Activated CD4-positive, alpha-beta T cell treated with anti-CD3 and anti-CD28 coated beads for 36 hours (primary cell): ENCODE measurements at regions of chr21 and their contacts with region 1.

Region 1: GRCh38 chr21:33299181-33299752 is 25.5 kb upstream of the IFNAR1 start:
- DNase-seq: peak; percentile 69
- ATAC-seq: peak; percentile 90
- H3K4me3 Mint-ChIP-seq: peak overlapping the region; percentile 19
- H3K27ac Mint-ChIP-seq: peak overlapping the region; percentile 85
- H3K4me1 Mint-ChIP-seq: peaks cover 44% of the 10 kb centered on the region
- H3K27me3 Mint-ChIP-seq: no peaks in the 10 kb centered on the region

Region 2: GRCh38 chr21:33069976-33070811 is 229.1 kb before region 1 on chr21 and contains the start of gene OLIG1:
- CTCF ChIA-PET with region 1: no interaction called
- POLR2A ChIA-PET with region 1: no interaction called
- intact Hi-C with region 1: no loop called
- DNase-seq: peak; percentile 68
- ATAC-seq: peak; percentile 85
- H3K4me3 Mint-ChIP-seq: peak within 1 kb of the TSS; percentile 59
- H3K27ac Mint-ChIP-seq: no peak within 1 kb of the TSS
- H3K4me1 Mint-ChIP-seq: peaks cover 8% of the 10 kb centered on the region
- H3K27me3 Mint-ChIP-seq: peaks cover 57% of the 10 kb centered on the region
- total RNA-seq, gene OLIG1: not detected

Region 3: DNA sequence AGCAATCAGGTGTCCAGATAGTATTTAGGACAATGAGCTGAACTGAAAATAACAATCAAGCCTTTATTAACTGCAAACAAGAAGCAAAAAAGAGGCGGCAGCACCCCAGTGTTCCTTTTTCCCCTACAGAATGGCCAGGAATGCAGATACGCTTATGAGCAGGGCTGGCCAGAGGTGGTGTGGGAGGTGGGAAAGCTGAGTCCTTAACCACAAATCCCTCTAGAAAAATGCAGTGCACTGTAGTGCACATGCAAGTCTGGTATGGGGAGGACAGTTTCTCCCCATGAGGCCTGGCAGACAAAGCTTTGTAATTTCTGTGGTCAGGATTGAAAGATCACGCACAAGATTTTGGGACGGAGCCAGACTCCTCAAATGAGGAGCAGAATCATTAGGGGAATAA is 14.8 kb after region 1 on chr21:
- CTCF ChIA-PET with region 1: interaction called, 10 read pairs
- POLR2A ChIA-PET with region 1: no interaction called
- intact Hi-C with region 1: no loop called
- DNase-seq: no peak
- ATAC-seq: no peak
- H3K4me3 Mint-ChIP-seq: no peak overlapping the region
- H3K27ac Mint-ChIP-seq: no peak overlapping the region
- H3K4me1 Mint-ChIP-seq: peaks cover 5% of the 10 kb centered on the region
- H3K27me3 Mint-ChIP-seq: no peaks in the 10 kb centered on the region

Region 4: DNA sequence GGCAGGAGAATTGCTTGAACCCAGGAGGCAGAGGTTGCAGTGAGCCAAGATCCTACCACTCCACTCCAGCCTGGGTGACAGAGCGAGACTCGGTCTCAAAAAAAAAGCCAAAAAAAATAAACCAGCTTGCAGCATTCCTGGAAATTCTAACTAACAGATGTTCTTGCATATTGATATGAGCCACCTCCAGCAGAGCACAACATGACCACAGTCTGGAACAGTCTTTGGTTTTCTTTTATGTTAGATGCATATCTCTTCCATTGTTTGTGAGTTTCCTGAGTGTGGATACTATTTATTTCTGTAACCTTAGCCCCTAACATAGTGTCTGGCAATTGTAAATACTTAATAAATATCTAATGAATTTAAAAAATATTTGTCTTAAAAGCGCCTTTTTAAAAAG is 49.4 kb after region 1 on chr21:
- CTCF ChIA-PET with region 1: no interaction called
- POLR2A ChIA-PET with region 1: no interaction called
- intact Hi-C with region 1: no loop called
- DNase-seq: no peak
- ATAC-seq: no peak
- H3K4me3 Mint-ChIP-seq: no peak overlapping the region
- H3K27ac Mint-ChIP-seq: no peak overlapping the region
- H3K4me1 Mint-ChIP-seq: peaks cover 8% of the 10 kb centered on the region
- H3K27me3 Mint-ChIP-seq: no peaks in the 10 kb centered on the region

Region 5: DNA sequence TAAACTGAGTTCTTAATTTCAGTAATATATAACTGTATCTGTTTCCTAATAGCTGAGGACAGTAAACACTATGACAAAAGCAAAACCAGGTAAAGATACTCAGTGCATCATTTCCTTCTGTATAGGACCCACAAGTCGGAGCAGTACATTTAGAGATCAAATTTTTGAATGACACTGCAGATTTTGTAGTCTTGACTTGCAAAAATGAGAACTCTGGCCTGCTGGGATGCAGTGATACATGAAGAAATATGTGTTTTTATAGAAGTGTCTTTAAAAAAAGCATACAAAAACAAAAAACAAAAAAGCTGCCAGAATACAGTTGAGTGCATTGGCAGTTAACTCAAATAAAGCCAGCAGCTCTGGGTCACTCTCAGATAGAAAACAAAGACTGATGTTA is 223.7 kb after region 1 on chr21:
- CTCF ChIA-PET with region 1: no interaction called
- POLR2A ChIA-PET with region 1: no interaction called
- intact Hi-C with region 1: no loop called
- DNase-seq: no peak
- ATAC-seq: no peak
- H3K4me3 Mint-ChIP-seq: no peak overlapping the region
- H3K27ac Mint-ChIP-seq: no peak overlapping the region
- H3K4me1 Mint-ChIP-seq: no peaks in the 10 kb centered on the region
- H3K27me3 Mint-ChIP-seq: no peaks in the 10 kb centered on the region